WTC11 (cell line): ENCODE measurements at regions of chr2 and their contacts with region 1.

Region 1: GRCh38 chr2:157952558-157952957 is 76.4 kb upstream of the ACVR1 start:
- DNase-seq: no peak
- ATAC-seq: no peak
- H3K4me3 Mint-ChIP-seq: no peak overlapping the region
- H3K27ac Mint-ChIP-seq: no peak overlapping the region
- H3K4me1 Mint-ChIP-seq: no peaks in the 10 kb centered on the region
- H3K27me3 Mint-ChIP-seq: peaks cover 15% of the 10 kb centered on the region
- CTCF ChIP-seq: no peak

Region 2: DNA sequence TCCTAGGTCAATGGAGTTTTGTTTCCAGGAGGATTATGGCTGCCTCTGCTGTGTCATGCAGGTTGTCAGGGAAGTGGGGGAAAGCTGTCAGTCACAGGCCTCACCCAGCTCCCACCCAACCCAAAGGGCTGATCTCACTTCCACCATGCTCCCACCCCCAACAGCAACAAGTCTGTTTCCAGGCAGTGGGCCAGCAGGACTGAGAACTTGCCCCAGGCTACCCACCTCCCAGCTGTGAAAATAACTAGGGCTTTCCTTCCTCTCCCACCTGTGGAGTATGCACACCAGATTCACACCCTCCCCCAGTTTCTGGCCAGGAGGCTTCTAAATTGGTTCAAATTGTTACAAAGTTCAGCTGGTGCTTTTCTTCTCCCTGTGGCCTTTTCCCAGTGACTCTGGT is 19.1 kb after region 1 on chr2:
- CTCF ChIA-PET with region 1: no interaction called
- POLR2A ChIA-PET with region 1: interaction called, 11 read pairs
- DNase-seq: no peak
- ATAC-seq: peak; percentile 30
- H3K4me3 Mint-ChIP-seq: no peak overlapping the region
- H3K27ac Mint-ChIP-seq: no peak overlapping the region
- H3K4me1 Mint-ChIP-seq: peaks cover 6% of the 10 kb centered on the region
- H3K27me3 Mint-ChIP-seq: peaks cover 13% of the 10 kb centered on the region
- CTCF ChIP-seq: no peak